ENCODE measurements at regions of chr11 and their contacts with region 1.

Region 1: GRCh38 chr11:75142714-75143419 is 8.0 kb upstream of the SLCO2B1 start:
- DNase-seq: peak; percentile 84
- H3K4me3 ChIP-seq: no peak overlapping the region
- H3K27ac ChIP-seq: peak overlapping the region; percentile 52
- H3K27me3 ChIP-seq: peaks cover 24% of the 10 kb centered on the region
- CTCF ChIP-seq: no peak

Region 2: GRCh38 chr11:74669211-74670160 is 473.4 kb before region 1 on chr11:
- CTCF ChIA-PET with region 1: no interaction called
- POLR2A ChIA-PET with region 1: no interaction called
- DNase-seq: no peak
- H3K4me3 ChIP-seq: no peak overlapping the region
- H3K27ac ChIP-seq: no peak overlapping the region
- H3K27me3 ChIP-seq: no peaks in the 10 kb centered on the region
- CTCF ChIP-seq: no peak

Region 3: DNA sequence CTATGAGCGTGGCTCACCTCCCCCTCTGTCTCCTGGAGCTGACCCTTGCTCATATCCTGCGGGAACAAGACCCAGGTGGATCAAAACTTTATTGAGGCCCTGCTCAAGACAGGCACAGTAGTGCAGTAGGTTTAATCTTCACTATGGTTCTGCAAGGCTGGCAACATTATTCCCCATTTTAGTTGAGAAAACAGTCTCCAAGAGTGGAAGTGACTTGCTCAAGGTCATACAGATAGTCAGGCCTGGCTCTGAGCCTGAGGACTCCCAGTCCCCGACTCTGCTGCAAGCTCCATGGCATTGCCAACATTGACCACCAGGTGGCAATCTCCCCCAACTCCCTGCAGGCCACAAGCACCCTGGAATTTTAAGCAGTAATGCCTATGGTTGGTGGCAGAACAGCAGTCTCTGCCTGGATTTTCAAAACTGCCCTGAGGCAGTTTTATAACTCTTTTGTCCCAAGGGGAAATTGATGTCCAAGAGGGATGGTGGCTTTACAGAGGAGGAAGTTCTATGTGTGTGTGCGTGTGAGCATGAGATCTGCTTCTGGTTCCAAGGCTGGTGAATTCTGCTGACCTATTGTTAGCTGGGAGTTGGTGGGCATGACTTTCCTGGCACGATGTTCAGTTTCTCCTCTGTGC is 120.0 kb before region 1 on chr11:
- CTCF ChIA-PET with region 1: interaction called, 13 read pairs
- POLR2A ChIA-PET with region 1: no interaction called
- DNase-seq: peak; percentile 72
- H3K4me3 ChIP-seq: no peak overlapping the region
- H3K27ac ChIP-seq: no peak overlapping the region
- H3K27me3 ChIP-seq: peaks cover 3% of the 10 kb centered on the region
- CTCF ChIP-seq: peak; percentile 99

Region 4: GRCh38 chr11:75155582-75156422 is 12.9 kb after region 1 on chr11:
- CTCF ChIA-PET with region 1: interaction called, 32 read pairs
- POLR2A ChIA-PET with region 1: interaction called, 3 read pairs
- DNase-seq: no peak
- H3K4me3 ChIP-seq: no peak overlapping the region
- H3K27ac ChIP-seq: no peak overlapping the region
- H3K27me3 ChIP-seq: peaks cover 40% of the 10 kb centered on the region
- CTCF ChIP-seq: no peak

Region 5: GRCh38 chr11:75241036-75241905 is 98.4 kb after region 1 on chr11:
- CTCF ChIA-PET with region 1: interaction called, 29 read pairs
- POLR2A ChIA-PET with region 1: no interaction called
- DNase-seq: peak; percentile 34
- H3K4me3 ChIP-seq: peak overlapping the region; percentile 60
- H3K27ac ChIP-seq: no peak overlapping the region
- H3K27me3 ChIP-seq: peaks cover 66% of the 10 kb centered on the region
- CTCF ChIP-seq: peak; percentile 51

Region 6: DNA sequence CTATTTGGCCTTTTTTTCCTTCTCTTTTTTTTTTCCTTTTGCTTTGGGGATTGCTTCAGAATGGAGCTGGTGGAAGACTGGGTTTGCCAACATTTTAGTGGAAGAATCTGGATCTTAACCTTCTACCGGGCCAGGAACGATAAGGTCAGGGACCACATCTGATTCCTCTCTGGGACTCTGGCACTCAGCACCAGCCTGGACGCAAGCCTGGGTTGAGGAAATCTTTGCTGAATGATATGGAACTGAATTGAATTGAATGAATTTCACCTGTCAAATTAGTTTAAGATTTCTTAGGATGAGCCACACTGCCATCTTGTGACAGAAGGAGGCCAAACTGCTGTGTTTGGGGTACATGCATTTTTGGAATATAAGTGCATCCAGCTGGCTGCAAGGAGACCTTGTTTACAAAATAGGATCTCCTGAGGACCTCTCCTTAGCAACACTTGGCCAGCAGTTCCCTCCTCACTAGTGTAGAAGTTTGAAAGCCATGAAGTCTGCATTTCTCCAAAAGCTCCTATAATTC is 128.1 kb after region 1 on chr11:
- CTCF ChIA-PET with region 1: interaction called, 11 read pairs
- POLR2A ChIA-PET with region 1: interaction called, 3 read pairs
- DNase-seq: no peak
- H3K4me3 ChIP-seq: no peak overlapping the region
- H3K27ac ChIP-seq: no peak overlapping the region
- H3K27me3 ChIP-seq: no peaks in the 10 kb centered on the region
- CTCF ChIP-seq: peak; percentile 42